Tibial artery (tissue), 4 donors: ENCODE measurements at regions of chr14 and their contacts with region 1.

Region 1: DNA sequence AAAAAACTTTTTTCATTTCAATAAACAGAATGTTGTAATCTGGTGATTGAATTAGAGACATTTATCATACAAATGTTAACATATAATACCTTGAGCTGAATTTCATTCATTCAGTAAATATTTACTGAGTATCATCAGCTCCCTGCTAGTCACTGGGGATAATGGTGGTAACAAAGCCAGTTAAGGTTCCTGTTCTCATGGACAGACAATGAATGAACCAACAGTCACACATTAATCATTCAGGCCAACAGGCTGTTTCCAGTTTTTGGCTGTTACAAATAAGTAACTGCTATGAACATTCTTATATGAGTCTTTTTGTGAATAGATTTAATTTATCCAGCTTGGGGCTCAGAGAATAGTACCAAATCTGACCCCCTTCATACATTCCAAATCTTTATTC is 13.5 kb downstream of the EXD2 start:
- DNase-seq: no peak
- H3K4me3 ChIP-seq: no peak overlapping the region
- H3K27ac ChIP-seq: no peak overlapping the region
- H3K4me1 ChIP-seq: no peaks in the 10 kb centered on the region
- H3K27me3 ChIP-seq: no peaks in the 10 kb centered on the region
- CTCF ChIP-seq: no peak

Region 2: DNA sequence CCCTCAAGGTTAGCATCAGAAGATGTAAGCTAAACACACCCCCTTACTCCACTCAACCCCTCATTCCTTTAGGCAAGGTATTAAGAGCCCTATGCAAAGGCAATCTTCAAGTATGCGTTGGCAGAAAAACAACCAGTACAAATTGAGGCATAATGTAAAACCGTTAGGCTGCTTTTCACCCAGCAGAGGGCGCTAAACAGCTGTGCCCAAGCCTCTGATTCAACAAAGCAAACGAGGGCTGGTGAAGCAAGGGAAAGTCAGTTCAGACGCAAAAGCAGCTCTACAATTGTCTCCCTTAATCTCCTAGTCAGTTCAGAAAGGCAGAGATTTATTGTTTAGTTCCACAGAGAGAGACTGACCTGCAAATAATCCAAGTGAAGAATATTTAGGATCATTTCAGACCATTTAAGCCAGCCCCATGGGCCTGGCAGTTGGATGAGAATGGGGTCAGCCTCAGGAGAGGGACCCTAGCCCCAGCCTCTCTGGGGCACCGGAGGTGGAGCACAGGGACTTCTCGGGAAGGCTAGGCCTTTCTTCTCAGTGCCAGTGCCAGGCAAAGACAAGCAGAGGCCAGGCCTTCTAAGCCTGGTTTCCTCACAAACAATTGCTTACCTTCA is 75.4 kb before region 1 on chr14:
- intact Hi-C with region 1: loop called (anchors 10 kb)
- DNase-seq: peak; percentile 55 to 75
- H3K4me3 ChIP-seq: no peak overlapping the region
- H3K27ac ChIP-seq: peak overlapping the region; percentile 4 to 42
- H3K4me1 ChIP-seq: peaks cover 0 to 61% (median 20%) of the 10 kb centered on the region in 4 donors
- H3K27me3 ChIP-seq: no peaks in the 10 kb centered on the region
- CTCF ChIP-seq: peak; percentile 83 to 88

Region 3: DNA sequence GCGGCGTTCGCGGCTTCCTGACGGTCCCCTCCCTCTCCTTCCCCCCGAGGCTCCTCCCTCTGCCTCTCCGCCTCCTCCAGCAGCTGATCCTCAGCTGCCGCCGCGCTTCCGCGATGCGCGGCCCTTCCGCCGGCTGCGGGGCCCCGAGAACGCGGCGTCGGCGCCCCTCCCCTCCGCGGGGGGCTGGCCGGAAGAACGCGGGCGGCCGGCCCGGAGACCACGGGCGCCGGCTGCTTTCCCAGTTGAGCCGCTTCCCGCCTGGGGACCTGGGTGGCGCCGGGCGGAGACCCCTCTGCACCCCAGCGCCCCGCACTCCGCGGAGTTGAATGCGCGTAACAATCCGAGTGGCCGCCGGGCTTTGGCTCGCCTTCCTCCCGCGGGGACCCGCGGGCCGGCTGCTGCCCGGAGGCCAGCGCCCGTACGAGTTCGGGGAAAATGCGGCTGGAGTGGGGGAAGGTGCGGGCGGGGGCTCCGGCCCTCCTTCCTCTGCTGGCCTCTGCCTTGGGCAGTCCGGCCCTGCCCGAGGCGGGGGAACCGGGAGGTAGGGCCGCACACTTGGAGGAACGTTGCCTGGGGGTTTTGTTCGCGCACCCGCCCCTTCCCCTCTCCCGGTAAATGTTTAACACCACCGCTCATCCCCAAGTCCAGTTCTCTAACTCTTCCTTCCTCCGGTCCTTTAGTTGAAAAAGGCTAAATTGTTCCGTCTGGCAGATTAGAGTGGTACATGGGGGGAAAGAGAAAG is 51.5 kb before region 1 on chr14:
- intact Hi-C with region 1: no loop called
- DNase-seq: peak; percentile 94 to 96
- H3K4me3 ChIP-seq: peak overlapping the region; percentile 69 to 95
- H3K27ac ChIP-seq: peak overlapping the region; percentile 91 to 98
- H3K4me1 ChIP-seq: peaks cover 0 to 39% (median 25%) of the 10 kb centered on the region in 4 donors
- H3K27me3 ChIP-seq: no peaks in the 10 kb centered on the region
- CTCF ChIP-seq: no peak

Region 4: GRCh38 chr14:69580009-69580577 is 375.3 kb after region 1 on chr14:
- intact Hi-C with region 1: no loop called
- DNase-seq: no peak
- H3K4me3 ChIP-seq: no peak overlapping the region
- H3K27ac ChIP-seq: no peak overlapping the region
- H3K4me1 ChIP-seq: no peaks in the 10 kb centered on the region
- H3K27me3 ChIP-seq: peaks cover 0 to 26% of the 10 kb centered on the region in 2 donors
- CTCF ChIP-seq: no peak